HepG2 (cell line): ENCODE measurements at regions of chr14 and their contacts with region 1.

Region 1: DNA sequence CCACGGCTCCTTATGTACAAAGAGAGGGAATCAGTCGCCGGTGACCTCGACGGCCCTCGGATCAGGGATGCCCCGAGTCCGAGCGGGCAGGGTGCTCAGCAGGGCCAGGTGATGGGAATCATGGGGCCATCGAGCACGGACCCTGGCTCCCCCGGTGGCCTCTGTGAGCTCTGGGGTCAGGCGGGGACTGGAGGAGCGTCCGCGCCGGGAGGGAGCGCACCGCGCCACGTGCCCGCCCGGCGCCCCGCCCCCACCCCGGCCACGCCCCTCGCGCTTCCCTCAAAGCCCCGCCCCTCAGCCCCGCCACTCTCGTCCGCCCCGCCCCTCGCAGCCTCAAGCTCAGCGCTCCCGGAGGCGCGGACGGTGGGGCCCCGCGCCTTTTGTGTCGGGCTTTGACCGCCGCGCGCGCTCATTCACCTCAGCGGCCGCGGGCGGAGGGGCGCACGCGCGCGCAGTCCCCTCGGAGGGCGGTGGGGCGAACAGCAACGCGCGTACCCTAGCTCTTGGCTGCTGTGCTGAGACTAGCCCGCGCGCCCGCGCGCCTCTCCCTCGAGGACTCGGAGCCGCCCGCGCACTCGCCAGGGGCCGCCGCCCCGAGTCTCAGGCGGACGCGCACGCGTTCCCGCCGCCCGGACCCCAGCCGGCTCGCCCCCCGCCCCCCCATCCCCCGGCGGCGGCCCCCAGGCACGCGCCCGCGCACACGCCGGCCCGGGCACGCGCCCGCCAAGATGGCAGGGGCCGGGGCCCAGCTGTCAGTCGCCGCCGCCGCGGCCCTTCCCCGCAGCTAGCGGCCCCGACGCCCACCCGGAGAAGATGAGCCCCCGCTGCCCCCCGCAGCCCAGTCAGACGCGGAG is 93.9 kb upstream of the EVL start:
- DNase-seq: peak; percentile 78
- ATAC-seq: peak; percentile 81
- H3K4me3 ChIP-seq: peak overlapping the region; percentile 52 to 92 (median 90); a peak in 5 of 6 replicates
- H3K27ac ChIP-seq: peak overlapping the region; percentile 77
- H3K4me1 ChIP-seq: peaks cover 46% of the 10 kb centered on the region
- H3K27me3 ChIP-seq: peaks cover 0 to 39% of the 10 kb centered on the region in 2 experiments; a peak in 4 of 5 replicates
- CTCF ChIP-seq: no peak
- EP300 ChIP-seq: no peak
- POLR2A ChIP-seq: peak; percentile 73 to 74
- RAD21 ChIP-seq: no peak

Region 2: DNA sequence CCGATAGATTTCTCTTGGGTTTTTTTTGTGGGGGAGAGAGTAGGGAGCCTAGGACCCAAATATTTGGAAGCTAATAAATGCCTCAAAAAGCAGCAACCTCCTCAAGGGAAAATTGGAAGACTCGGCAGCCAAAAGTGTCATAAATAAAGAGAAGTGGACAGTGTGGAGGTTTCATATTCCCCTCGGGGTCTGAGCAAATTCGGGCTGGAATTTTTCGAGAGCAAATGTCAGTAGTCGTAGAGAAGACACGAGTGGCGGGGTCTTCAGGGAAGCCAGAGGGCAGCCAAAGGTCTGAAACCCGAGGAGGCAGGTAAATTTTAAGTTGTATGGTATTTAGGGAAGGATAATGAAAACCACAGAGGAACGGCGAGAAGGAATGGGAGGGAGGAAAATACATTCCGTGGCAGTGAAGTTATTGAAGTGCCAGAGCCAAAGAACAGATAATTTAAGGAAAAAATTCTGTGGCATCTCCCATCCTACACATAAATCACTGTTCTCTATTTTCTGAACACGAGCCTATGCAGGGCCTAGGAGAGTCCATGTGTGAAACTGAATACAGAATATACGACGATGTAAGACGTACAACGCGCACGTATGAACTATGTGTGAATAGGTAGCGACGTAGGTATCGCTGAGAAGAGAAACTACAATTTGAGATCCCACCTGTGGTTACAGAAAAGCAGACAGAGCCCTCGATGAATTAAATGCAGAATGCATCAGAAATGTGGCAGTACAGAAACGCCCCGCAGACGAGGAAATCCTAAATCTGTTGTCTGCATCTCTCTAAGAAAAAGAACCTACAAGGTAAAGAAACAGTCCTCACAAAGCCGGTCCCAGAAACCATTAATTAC is 712.2 kb before region 1 on chr14:
- CTCF ChIA-PET with region 1: no interaction called
- POLR2A ChIA-PET with region 1: no interaction called
- in situ Hi-C with region 1: no loop called
- intact Hi-C with region 1: loop called (anchors 5 kb)
- DNase-seq: no peak
- ATAC-seq: no peak
- H3K4me3 ChIP-seq: no peak overlapping the region
- H3K27ac ChIP-seq: no peak overlapping the region
- H3K4me1 ChIP-seq: no peaks in the 10 kb centered on the region
- H3K27me3 ChIP-seq: peaks cover 3 to 79% of the 10 kb centered on the region in 2 experiments; a peak in 4 of 5 replicates
- CTCF ChIP-seq: no peak
- EP300 ChIP-seq: no peak
- POLR2A ChIP-seq: no peak
- RAD21 ChIP-seq: no peak